ENCODE measurements at regions of chr9 and their contacts with region 1.

Region 1: DNA sequence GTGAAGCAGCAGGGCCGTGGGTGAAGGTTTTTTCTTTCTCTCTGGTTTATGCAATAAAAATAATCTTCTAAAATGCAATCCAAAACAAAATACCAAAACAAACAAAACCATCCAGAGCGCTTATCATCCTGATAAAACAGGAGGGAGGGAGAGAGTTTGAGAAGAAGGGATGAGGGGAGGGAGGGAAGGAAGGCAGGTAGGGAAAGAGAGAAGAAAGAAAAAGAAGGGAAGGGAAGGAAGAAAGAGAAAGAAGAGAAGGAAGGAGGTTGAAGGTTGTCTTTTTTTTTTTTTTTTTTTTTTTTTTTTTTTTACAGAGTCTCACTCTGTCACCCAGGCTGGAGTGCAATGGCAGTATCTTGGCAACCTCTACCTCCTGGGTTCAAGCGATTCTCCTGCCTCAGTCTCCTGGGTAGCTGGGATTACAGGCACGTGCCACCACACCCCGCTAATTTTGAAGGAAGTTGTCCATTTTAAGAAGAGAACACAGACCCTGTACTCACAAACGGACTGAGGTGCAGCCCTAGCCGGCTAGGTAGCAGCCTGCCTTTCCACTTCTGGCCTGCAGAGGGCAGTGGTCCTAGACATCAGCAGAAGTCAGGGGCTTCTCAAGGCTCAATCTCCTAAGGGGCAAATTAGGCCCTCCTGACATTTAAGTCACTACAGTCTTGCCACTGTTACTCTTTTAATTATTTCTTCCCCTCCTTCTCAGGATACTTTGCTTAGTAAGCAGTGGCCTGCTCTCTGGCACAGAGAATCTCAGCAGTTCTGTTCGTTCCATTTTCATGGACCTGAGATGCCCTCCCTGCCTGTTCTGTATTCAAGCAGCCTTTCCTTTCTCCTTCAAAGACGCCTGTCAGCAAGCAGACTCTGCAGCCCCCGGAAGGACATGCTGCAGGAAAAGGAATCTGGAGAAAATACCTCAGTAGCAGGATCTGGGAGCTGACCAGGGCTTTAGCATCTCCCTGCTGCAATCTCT is 76.4 kb downstream of the EPB41L4B start:
- DNase-seq: peak; percentile 10 to 64 (median 40)
- ATAC-seq: peak; percentile 81
- H3K4me3 ChIP-seq: no peak overlapping the region
- H3K4me3 Mint-ChIP-seq: peak overlapping the region in 1 of 10 donors; percentile 56
- H3K27ac ChIP-seq: no peak overlapping the region
- H3K27ac Mint-ChIP-seq: peak overlapping the region in 1 of 9 donors; percentile 54
- H3K4me1 ChIP-seq: no peaks in the 10 kb centered on the region
- H3K4me1 Mint-ChIP-seq: no peaks in the 10 kb centered on the region
- H3K27me3 ChIP-seq: no peaks in the 10 kb centered on the region
- H3K27me3 Mint-ChIP-seq: peaks cover 22 to 39% (median 27%) of the 10 kb centered on the region in 5 donors

Region 2: GRCh38 chr9:108903420-108904103 is 340.9 kb before region 1 on chr9:
- CTCF ChIA-PET with region 1: no interaction called
- POLR2A ChIA-PET with region 1: no interaction called
- intact Hi-C with region 1: no loop called
- DNase-seq: no peak
- ATAC-seq: peak; percentile 44
- H3K4me3 ChIP-seq: no peak overlapping the region
- H3K4me3 Mint-ChIP-seq: no peak overlapping the region
- H3K27ac ChIP-seq: no peak overlapping the region
- H3K27ac Mint-ChIP-seq: no peak overlapping the region
- H3K4me1 ChIP-seq: no peaks in the 10 kb centered on the region
- H3K4me1 Mint-ChIP-seq: peaks cover 0 to under 1% (median 0%) of the 10 kb centered on the region in 7 donors
- H3K27me3 ChIP-seq: no peaks in the 10 kb centered on the region
- H3K27me3 Mint-ChIP-seq: no peaks in the 10 kb centered on the region

Region 3: GRCh38 chr9:109214414-109214813 is 30.0 kb before region 1 on chr9:
- CTCF ChIA-PET with region 1: no interaction called
- POLR2A ChIA-PET with region 1: no interaction called
- intact Hi-C with region 1: no loop called
- DNase-seq: no peak
- ATAC-seq: no peak
- H3K4me3 ChIP-seq: no peak overlapping the region
- H3K4me3 Mint-ChIP-seq: no peak overlapping the region
- H3K27ac ChIP-seq: no peak overlapping the region
- H3K27ac Mint-ChIP-seq: no peak overlapping the region
- H3K4me1 ChIP-seq: no peaks in the 10 kb centered on the region
- H3K4me1 Mint-ChIP-seq: no peaks in the 10 kb centered on the region
- H3K27me3 ChIP-seq: peaks cover 0 to 2% of the 10 kb centered on the region in 2 donors
- H3K27me3 Mint-ChIP-seq: peaks cover 3 to 36% (median 19%) of the 10 kb centered on the region in 5 donors

Region 4: GRCh38 chr9:109453210-109453842 is 208.9 kb after region 1 on chr9:
- CTCF ChIA-PET with region 1: no interaction called
- POLR2A ChIA-PET with region 1: no interaction called
- intact Hi-C with region 1: no loop called
- DNase-seq: no peak
- ATAC-seq: no peak
- H3K4me3 ChIP-seq: no peak overlapping the region
- H3K4me3 Mint-ChIP-seq: no peak overlapping the region
- H3K27ac ChIP-seq: no peak overlapping the region
- H3K27ac Mint-ChIP-seq: no peak overlapping the region
- H3K4me1 ChIP-seq: no peaks in the 10 kb centered on the region
- H3K4me1 Mint-ChIP-seq: peaks cover 0 to 23% (median 0%) of the 10 kb centered on the region in 7 donors
- H3K27me3 ChIP-seq: no peaks in the 10 kb centered on the region
- H3K27me3 Mint-ChIP-seq: peaks cover 14 to 46% (median 20%) of the 10 kb centered on the region in 5 donors

Region 5: GRCh38 chr9:109469646-109470358 is 225.4 kb after region 1 on chr9:
- CTCF ChIA-PET with region 1: no interaction called
- POLR2A ChIA-PET with region 1: no interaction called
- intact Hi-C with region 1: loop called (anchors 2 to 5 kb)
- DNase-seq: peak in 8 of 9 donors; percentile 11 to 69 (median 24)
- ATAC-seq: peak; percentile 78
- H3K4me3 ChIP-seq: no peak overlapping the region
- H3K4me3 Mint-ChIP-seq: no peak overlapping the region
- H3K27ac ChIP-seq: no peak overlapping the region
- H3K27ac Mint-ChIP-seq: no peak overlapping the region
- H3K4me1 ChIP-seq: no peaks in the 10 kb centered on the region
- H3K4me1 Mint-ChIP-seq: peaks cover 0 to 38% (median 0%) of the 10 kb centered on the region in 7 donors
- H3K27me3 ChIP-seq: no peaks in the 10 kb centered on the region
- H3K27me3 Mint-ChIP-seq: peaks cover 4 to 46% (median 16%) of the 10 kb centered on the region in 5 donors

Region 6: DNA sequence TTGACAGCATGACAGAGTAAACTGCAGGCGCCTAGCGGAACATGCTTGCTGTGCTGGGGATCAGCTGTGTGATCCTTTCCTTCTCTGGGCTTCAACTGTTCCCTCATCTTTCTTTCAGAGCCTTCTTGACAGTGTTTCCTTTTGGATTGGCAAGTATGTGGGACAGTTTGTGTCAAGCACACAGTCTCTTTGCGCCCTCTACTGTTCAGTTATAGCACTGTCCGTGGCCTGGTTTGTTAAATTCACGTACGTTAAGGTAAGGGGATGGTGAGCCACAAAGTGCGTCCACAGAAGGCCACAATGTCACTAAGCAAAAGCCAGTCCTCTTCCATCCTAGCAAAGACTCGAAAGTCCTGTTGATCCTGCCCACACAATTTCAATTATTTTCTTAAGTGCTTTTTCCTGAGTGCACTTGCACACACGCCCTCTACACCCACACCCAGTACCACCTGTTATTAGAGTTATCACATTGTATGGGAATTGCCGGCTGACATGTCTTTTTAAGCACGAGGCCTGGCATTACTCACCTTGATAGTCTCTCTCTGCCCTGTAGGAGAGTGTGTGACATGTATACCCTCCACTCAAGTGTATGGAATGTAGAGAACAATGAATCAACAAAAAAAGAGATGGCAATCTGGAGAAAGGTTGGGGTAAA is 276.2 kb after region 1 on chr9:
- CTCF ChIA-PET with region 1: no interaction called
- POLR2A ChIA-PET with region 1: no interaction called
- intact Hi-C with region 1: loop called in 1 of 2 experiments (anchors 1 kb)
- DNase-seq: peak in 2 of 9 donors; percentile 7 to 50
- ATAC-seq: peak; percentile 50
- H3K4me3 ChIP-seq: no peak overlapping the region
- H3K4me3 Mint-ChIP-seq: no peak overlapping the region
- H3K27ac ChIP-seq: no peak overlapping the region
- H3K27ac Mint-ChIP-seq: no peak overlapping the region
- H3K4me1 ChIP-seq: no peaks in the 10 kb centered on the region
- H3K4me1 Mint-ChIP-seq: peaks cover 0 to 2% (median 0%) of the 10 kb centered on the region in 7 donors
- H3K27me3 ChIP-seq: no peaks in the 10 kb centered on the region
- H3K27me3 Mint-ChIP-seq: peaks cover 0 to 19% (median 13%) of the 10 kb centered on the region in 5 donors

Measured in naive thymus-derived CD4-positive, alpha-beta T cell (primary cell).